A549 (cell line): ENCODE measurements at regions of chr15 and their contacts with region 1.

Region 1: GRCh38 chr15:89358755-89359439 is 24.3 kb upstream of the POLG start:
- DNase-seq: peak; percentile 86 to 94
- ATAC-seq: peak; percentile 63 to 83
- H3K4me3 ChIP-seq: peak overlapping the region; percentile 35
- H3K27ac ChIP-seq: peak overlapping the region; percentile 31 to 80; a peak in 5 of 6 replicates
- H3K4me1 ChIP-seq: peaks cover 28% of the 10 kb centered on the region
- CTCF ChIP-seq: peak; percentile 100
- EP300 ChIP-seq: no peak
- POLR2A ChIP-seq: no peak
- RAD21 ChIP-seq: peak; percentile 93 to 99

Region 2: DNA sequence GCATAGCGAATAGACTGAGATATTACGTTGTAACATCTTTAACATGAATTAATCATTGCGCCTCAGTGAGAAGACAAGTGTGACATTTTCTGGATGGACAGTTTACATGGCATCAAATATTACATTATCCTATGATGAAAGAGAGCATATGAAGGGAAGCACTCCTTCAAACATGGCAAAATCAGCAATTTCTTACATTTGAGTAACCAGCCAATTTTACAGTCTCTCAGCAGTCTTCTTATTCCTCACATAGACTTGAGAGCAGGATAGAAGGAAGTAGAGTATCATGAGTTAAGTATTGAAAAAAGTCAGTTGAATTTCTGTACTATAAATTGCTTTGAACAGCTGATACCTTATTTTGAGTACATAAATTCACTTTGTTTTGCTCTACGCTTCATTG is 76.3 kb before region 1 on chr15:
- CTCF ChIA-PET with region 1: no interaction called
- POLR2A ChIA-PET with region 1: no interaction called
- DNase-seq: no peak
- ATAC-seq: no peak
- H3K4me3 ChIP-seq: no peak overlapping the region
- H3K27ac ChIP-seq: no peak overlapping the region
- H3K4me1 ChIP-seq: no peaks in the 10 kb centered on the region
- CTCF ChIP-seq: no peak
- EP300 ChIP-seq: no peak
- POLR2A ChIP-seq: no peak
- RAD21 ChIP-seq: no peak

Region 3: DNA sequence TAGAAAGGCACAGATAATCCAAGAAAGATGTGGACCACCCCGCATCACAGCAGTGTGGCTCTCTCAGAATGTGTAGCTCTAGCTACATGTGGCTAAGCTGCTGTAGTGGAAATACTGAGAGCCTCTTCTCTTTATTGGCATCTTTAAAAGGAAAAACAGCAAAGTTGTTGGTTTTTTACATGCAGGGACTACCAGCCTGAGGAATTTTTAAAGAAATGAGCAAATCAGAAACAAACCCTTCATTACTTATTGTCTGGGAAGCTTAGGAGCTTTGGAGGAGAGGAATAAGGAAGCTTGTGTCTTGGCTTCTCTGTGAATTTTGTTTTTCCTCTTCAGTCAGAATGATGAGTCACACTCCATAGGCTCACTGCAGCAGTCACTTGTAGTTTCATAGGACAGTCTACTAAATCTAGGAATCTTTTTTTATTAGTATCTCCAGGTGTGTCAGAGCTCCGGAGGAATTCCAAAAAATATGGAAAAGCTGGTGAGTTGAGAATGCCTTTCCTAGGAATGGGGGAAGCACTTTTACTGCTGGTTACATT is 51.8 kb before region 1 on chr15:
- CTCF ChIA-PET with region 1: interaction called, 15 read pairs
- POLR2A ChIA-PET with region 1: no interaction called
- DNase-seq: no peak
- ATAC-seq: peak; percentile 19 to 53; a peak in 3 of 6 replicates
- H3K4me3 ChIP-seq: no peak overlapping the region
- H3K27ac ChIP-seq: peak overlapping the region; percentile 28 to 51; a peak in 4 of 6 replicates
- H3K4me1 ChIP-seq: peaks cover 14% of the 10 kb centered on the region
- CTCF ChIP-seq: no peak
- EP300 ChIP-seq: no peak
- POLR2A ChIP-seq: no peak
- RAD21 ChIP-seq: no peak

Region 4: GRCh38 chr15:89399238-89400120 is 40.6 kb after region 1 on chr15:
- CTCF ChIA-PET with region 1: interaction called, 494 read pairs
- POLR2A ChIA-PET with region 1: interaction called, 6 read pairs
- DNase-seq: peak; percentile 84 to 90
- ATAC-seq: peak; percentile 79 to 87
- H3K4me3 ChIP-seq: peak overlapping the region; percentile 79
- H3K27ac ChIP-seq: peak overlapping the region; percentile 86 to 87
- H3K4me1 ChIP-seq: peaks cover 24% of the 10 kb centered on the region
- CTCF ChIP-seq: peak; percentile 62
- EP300 ChIP-seq: no peak
- POLR2A ChIP-seq: peak; percentile 41; the same call in 1 of the 2 replicates
- RAD21 ChIP-seq: peak; percentile 31 to 37; a peak in 2 of 5 replicates

Region 5: DNA sequence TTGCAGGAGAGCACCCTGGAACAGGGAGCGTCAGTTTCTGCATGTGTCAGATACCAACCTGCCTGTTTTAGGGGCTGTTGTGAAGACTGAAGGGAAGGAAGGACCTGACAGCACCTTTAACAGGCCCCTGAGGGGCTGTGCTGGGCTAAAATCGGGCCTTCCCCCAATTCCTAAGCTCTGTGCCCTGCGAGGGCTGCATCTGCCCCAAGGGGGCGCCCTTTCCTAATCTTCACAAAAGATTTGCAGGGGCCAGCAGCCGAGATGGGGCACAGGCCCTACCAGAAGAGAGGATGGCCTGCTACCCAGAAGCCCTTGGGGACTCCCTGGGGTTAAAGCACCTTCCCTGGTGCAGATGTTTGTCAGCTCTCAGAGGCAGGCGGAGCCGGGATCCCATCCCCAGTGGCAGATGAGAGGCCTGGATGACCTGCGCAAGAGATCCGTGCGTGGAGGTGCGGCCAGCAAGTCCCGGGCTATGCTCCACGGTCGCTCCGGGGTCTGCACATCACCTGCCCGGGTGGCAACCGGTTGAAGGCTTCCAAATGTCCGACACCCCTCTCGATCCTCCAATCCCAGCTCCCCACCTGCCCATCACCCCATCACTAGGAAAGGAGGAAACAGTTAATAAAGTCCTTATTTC is 83.9 kb after region 1 on chr15:
- CTCF ChIA-PET with region 1: interaction called, 369 read pairs
- POLR2A ChIA-PET with region 1: no interaction called
- DNase-seq: peak; percentile 68 to 88
- ATAC-seq: peak; percentile 73 to 93
- H3K4me3 ChIP-seq: no peak overlapping the region
- H3K27ac ChIP-seq: no peak overlapping the region
- H3K4me1 ChIP-seq: no peaks in the 10 kb centered on the region
- CTCF ChIP-seq: peak; percentile 84
- EP300 ChIP-seq: no peak
- POLR2A ChIP-seq: no peak
- RAD21 ChIP-seq: peak; percentile 77

Region 6: DNA sequence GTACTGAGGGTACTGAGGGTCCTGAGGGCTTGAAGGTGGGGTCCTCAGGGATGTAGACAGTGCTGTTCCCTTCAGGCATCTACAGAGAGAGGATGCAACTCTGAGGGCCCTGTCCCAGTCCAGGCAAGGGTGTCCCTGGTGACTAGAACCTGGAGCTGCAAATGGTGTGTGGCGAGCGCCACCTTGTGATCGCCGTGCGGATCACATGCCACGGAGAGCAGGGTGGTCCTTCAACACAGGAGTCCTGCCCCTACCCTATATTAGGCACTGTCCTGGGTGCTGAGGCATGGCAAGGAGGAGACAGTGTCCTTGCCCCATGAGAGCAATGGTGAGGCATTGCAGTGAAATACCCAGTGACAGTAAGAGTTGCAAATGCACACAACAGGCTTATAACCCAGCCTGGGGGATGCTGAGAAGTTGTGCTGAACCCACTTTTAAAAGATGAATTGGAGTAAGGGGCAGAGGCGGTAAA is 113.9 kb after region 1 on chr15:
- CTCF ChIA-PET with region 1: interaction called, 242 read pairs
- POLR2A ChIA-PET with region 1: interaction called, 5 read pairs
- DNase-seq: peak; percentile 78 to 88
- ATAC-seq: peak; percentile 74 to 95
- H3K4me3 ChIP-seq: no peak overlapping the region
- H3K27ac ChIP-seq: no peak overlapping the region
- H3K4me1 ChIP-seq: peaks cover 4% of the 10 kb centered on the region; the same call in 1 of the 3 replicates
- CTCF ChIP-seq: peak; percentile 94
- EP300 ChIP-seq: no peak
- POLR2A ChIP-seq: no peak
- RAD21 ChIP-seq: peak; percentile 92 to 96

Region 7: DNA sequence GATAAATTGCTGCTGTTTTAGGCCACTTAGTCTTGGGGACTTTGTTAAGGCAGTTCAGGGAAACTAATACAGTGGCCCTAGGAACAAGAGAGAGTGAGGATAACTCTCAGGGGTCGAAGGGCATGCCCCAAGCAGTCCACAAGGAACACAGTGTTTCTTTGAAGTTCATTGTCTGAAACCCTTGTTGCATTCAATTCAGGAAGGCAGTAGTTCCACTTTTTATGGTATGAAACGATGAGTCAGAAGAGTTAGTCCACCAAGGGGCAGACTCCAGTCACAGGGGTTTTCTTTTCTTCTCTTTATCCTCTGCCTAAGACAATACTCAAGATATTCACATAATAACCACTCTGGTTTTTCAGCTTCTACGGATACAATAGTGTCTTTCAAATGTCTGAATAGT is 192.6 kb after region 1 on chr15:
- CTCF ChIA-PET with region 1: interaction called, 26 read pairs
- POLR2A ChIA-PET with region 1: no interaction called
- DNase-seq: no peak
- ATAC-seq: no peak
- H3K4me3 ChIP-seq: no peak overlapping the region
- H3K27ac ChIP-seq: peak overlapping the region in 1 of 2 experiments; percentile 32; a peak in 1 of 6 replicates
- H3K4me1 ChIP-seq: peaks cover 2% of the 10 kb centered on the region; the same call in 2 of the 3 replicates
- CTCF ChIP-seq: no peak
- EP300 ChIP-seq: no peak
- POLR2A ChIP-seq: no peak
- RAD21 ChIP-seq: no peak

Region 8: GRCh38 chr15:89971592-89971997 is 612.7 kb after region 1 on chr15:
- CTCF ChIA-PET with region 1: no interaction called
- POLR2A ChIA-PET with region 1: no interaction called
- DNase-seq: peak; percentile 82 to 87
- ATAC-seq: peak; percentile 100
- H3K4me3 ChIP-seq: no peak overlapping the region
- H3K27ac ChIP-seq: no peak overlapping the region
- H3K4me1 ChIP-seq: no peaks in the 10 kb centered on the region
- CTCF ChIP-seq: peak; percentile 69
- EP300 ChIP-seq: no peak
- POLR2A ChIP-seq: no peak
- RAD21 ChIP-seq: peak; percentile 48 to 65